CD4-positive, alpha-beta memory T cell (primary cell): ENCODE measurements at regions of chr1 and their contacts with region 1.

Region 1: GRCh38 chr1:94805912-94806311 is 14.2 kb upstream of the SLC44A3 start:
- DNase-seq: peak; percentile 33 to 46 (median 44)
- H3K4me3 ChIP-seq: no peak overlapping the region
- H3K4me3 Mint-ChIP-seq: peak overlapping the region in 2 of 8 donors; percentile 31 to 55
- H3K27ac ChIP-seq: no peak overlapping the region
- H3K27ac Mint-ChIP-seq: peak overlapping the region in 1 of 7 donors; percentile 2
- H3K4me1 ChIP-seq: peaks cover 4% of the 10 kb centered on the region
- H3K4me1 Mint-ChIP-seq: peaks cover 12 to 34% (median 18%) of the 10 kb centered on the region in 4 donors
- H3K27me3 ChIP-seq: no peaks in the 10 kb centered on the region
- H3K27me3 Mint-ChIP-seq: peaks cover 1 to 5% of the 10 kb centered on the region in 2 donors

Region 2: GRCh38 chr1:94025383-94026340 is 780.2 kb before region 1 on chr1:
- CTCF ChIA-PET with region 1: interaction called, 7 read pairs
- POLR2A ChIA-PET with region 1: no interaction called
- intact Hi-C with region 1: loop called (anchors 1 kb)
- DNase-seq: peak in 1 of 5 donors; percentile 11
- H3K4me3 ChIP-seq: no peak overlapping the region
- H3K4me3 Mint-ChIP-seq: no peak overlapping the region
- H3K27ac ChIP-seq: no peak overlapping the region
- H3K27ac Mint-ChIP-seq: no peak overlapping the region
- H3K4me1 ChIP-seq: no peaks in the 10 kb centered on the region
- H3K4me1 Mint-ChIP-seq: no peaks in the 10 kb centered on the region
- H3K27me3 ChIP-seq: no peaks in the 10 kb centered on the region
- H3K27me3 Mint-ChIP-seq: peaks cover 2 to 6% of the 10 kb centered on the region in 2 donors

Region 3: GRCh38 chr1:94061513-94062443 is 744.1 kb before region 1 on chr1:
- CTCF ChIA-PET with region 1: no interaction called
- POLR2A ChIA-PET with region 1: no interaction called
- intact Hi-C with region 1: loop called (anchors 1 kb)
- DNase-seq: peak in 1 of 5 donors; percentile 8
- H3K4me3 ChIP-seq: no peak overlapping the region
- H3K4me3 Mint-ChIP-seq: no peak overlapping the region
- H3K27ac ChIP-seq: no peak overlapping the region
- H3K27ac Mint-ChIP-seq: no peak overlapping the region
- H3K4me1 ChIP-seq: no peaks in the 10 kb centered on the region
- H3K4me1 Mint-ChIP-seq: no peaks in the 10 kb centered on the region
- H3K27me3 ChIP-seq: no peaks in the 10 kb centered on the region
- H3K27me3 Mint-ChIP-seq: peaks cover 15 to 17% of the 10 kb centered on the region in 2 donors

Region 4: DNA sequence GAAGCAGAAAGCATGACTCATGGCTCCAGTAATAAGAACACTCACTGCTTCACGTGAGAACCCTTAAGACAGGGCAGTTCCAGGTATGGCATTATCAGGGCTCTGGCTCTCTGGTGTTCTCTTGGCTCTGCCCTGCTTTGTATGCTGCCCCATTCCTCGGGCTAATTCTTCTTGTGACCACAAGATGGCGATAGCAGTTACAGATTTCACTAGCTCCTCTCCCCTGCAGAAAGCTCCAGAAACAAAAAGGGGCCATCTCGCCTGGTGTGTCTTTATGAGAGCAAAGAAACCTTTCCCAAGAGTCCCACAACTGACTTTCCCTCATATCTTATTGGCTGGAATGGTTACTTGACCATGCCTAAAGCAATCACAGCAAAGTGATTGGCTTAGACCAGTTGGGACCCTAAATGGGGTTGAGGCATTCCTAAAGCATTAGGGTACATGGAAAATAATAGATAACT is 324.4 kb before region 1 on chr1:
- CTCF ChIA-PET with region 1: interaction called, 61 read pairs
- POLR2A ChIA-PET with region 1: no interaction called
- intact Hi-C with region 1: loop called (anchors 1 kb)
- DNase-seq: peak; percentile 36 to 48 (median 44)
- H3K4me3 ChIP-seq: no peak overlapping the region
- H3K4me3 Mint-ChIP-seq: no peak overlapping the region
- H3K27ac ChIP-seq: no peak overlapping the region
- H3K27ac Mint-ChIP-seq: no peak overlapping the region
- H3K4me1 ChIP-seq: no peaks in the 10 kb centered on the region
- H3K4me1 Mint-ChIP-seq: peaks cover 0 to 3% (median 0%) of the 10 kb centered on the region in 4 donors
- H3K27me3 ChIP-seq: no peaks in the 10 kb centered on the region
- H3K27me3 Mint-ChIP-seq: no peaks in the 10 kb centered on the region

Region 5: DNA sequence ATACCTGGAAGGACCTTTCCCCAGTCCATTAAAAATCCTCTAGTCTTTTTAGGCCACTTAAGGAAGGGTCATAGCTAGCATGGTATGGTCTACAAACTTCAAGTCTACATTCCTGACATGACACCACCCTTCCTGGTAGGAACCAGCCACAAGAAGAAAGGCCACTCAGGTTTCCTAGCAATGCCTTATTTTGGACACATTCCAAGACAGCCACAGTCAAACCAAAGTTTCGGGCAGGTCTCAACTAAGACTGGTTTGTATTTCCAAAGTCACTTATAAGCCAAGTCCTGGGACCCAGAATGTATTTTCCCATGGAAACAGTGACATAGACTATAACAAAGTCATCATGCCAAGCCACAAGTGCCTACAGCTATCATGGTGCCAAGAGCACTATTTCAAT is 36.4 kb before region 1 on chr1:
- CTCF ChIA-PET with region 1: no interaction called
- POLR2A ChIA-PET with region 1: no interaction called
- intact Hi-C with region 1: no loop called
- DNase-seq: no peak
- H3K4me3 ChIP-seq: no peak overlapping the region
- H3K4me3 Mint-ChIP-seq: no peak overlapping the region
- H3K27ac ChIP-seq: no peak overlapping the region
- H3K27ac Mint-ChIP-seq: no peak overlapping the region
- H3K4me1 ChIP-seq: no peaks in the 10 kb centered on the region
- H3K4me1 Mint-ChIP-seq: no peaks in the 10 kb centered on the region
- H3K27me3 ChIP-seq: no peaks in the 10 kb centered on the region
- H3K27me3 Mint-ChIP-seq: no peaks in the 10 kb centered on the region

Region 6: DNA sequence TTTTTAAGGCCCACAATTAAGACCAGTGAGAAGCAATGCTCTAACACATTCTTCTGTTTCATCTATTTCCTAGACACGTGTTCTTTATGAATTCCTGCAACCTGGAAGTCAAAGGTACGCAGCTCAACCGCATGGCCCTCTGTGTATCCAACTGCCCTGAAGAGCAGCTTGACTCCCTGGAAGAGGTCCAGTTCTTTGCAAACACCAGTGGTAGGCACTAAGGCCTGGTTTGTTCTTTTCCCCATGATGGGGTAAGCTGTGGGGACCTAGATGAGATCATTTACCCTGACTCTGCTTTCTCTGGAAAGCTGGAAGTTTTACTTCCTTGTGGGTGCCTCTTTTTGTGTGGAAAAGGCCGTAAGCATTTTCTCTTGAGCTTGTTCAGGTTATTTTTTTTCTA is 21.5 kb after region 1 on chr1:
- CTCF ChIA-PET with region 1: interaction called, 10 read pairs
- POLR2A ChIA-PET with region 1: no interaction called
- intact Hi-C with region 1: no loop called
- DNase-seq: no peak
- H3K4me3 ChIP-seq: no peak overlapping the region
- H3K4me3 Mint-ChIP-seq: no peak overlapping the region
- H3K27ac ChIP-seq: no peak overlapping the region
- H3K27ac Mint-ChIP-seq: no peak overlapping the region
- H3K4me1 ChIP-seq: no peaks in the 10 kb centered on the region
- H3K4me1 Mint-ChIP-seq: no peaks in the 10 kb centered on the region
- H3K27me3 ChIP-seq: peaks cover 7% of the 10 kb centered on the region
- H3K27me3 Mint-ChIP-seq: peaks cover 15 to 18% of the 10 kb centered on the region in 2 donors